ENCODE measurements at regions of chr2 and their contacts with region 1.

Region 1: DNA sequence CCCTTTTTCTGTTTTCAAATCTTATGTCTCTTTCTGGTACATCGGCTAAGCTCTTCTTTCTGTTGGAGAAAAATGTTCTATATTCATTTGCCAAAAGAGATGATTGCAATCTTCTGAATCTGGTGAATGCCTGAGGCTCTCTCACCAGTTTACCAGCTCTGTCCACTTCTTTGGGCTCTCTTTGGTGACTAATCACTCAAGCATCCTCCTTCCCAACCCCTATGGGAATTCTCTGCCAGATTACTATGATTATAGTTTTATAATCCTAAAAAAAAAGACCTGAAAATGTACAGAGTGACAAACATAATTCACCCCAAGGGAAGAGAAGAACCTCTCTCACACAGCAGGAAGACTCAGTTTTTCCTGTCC is 187.3 kb downstream of the CAMKMT start:
- DNase-seq: peak; percentile 68 to 96
- H3K4me3 ChIP-seq: peak overlapping the region; percentile 32
- H3K27ac ChIP-seq: peak overlapping the region; percentile 87
- H3K4me1 ChIP-seq: peaks cover 71% of the 10 kb centered on the region
- H3K27me3 ChIP-seq: no peaks in the 10 kb centered on the region
- CTCF ChIP-seq: no peak

Region 2: DNA sequence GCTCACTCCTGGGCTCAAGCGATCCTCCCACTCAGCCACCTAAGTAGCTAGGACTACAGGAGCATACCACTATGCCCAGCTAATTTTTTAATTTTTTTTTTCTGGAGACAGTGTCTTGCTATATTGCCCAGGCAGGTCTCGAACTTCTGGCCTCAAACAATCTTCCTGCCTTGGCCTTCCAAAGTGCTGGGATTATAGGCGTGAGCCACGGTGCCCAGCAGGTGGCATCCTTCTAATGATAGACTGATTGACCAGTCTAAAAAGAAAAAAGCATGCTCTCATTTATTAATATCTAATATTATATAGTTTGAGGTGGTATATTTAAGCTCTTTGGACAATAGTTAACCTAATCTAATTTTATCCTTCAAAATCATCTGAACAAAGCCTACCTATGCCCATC is 11.3 kb after region 1 on chr2:
- CTCF ChIA-PET with region 1: no interaction called
- POLR2A ChIA-PET with region 1: no interaction called
- intact Hi-C with region 1: loop called (anchors 1 kb)
- DNase-seq: peak; percentile 26 to 37
- H3K4me3 ChIP-seq: no peak overlapping the region
- H3K27ac ChIP-seq: peak overlapping the region; percentile 72
- H3K4me1 ChIP-seq: peaks cover 29% of the 10 kb centered on the region
- H3K27me3 ChIP-seq: no peaks in the 10 kb centered on the region
- CTCF ChIP-seq: peak; percentile 57

Region 3: GRCh38 chr2:44582363-44583008 is 33.4 kb after region 1 on chr2:
- CTCF ChIA-PET with region 1: no interaction called
- POLR2A ChIA-PET with region 1: no interaction called
- intact Hi-C with region 1: loop called (anchors 1 kb)
- DNase-seq: peak; percentile 9 to 95
- H3K4me3 ChIP-seq: peak overlapping the region; percentile 4; the same call in 1 of the 2 replicates
- H3K27ac ChIP-seq: peak overlapping the region; percentile 52
- H3K4me1 ChIP-seq: peaks cover 61% of the 10 kb centered on the region
- H3K27me3 ChIP-seq: no peaks in the 10 kb centered on the region
- CTCF ChIP-seq: no peak

Region 4: GRCh38 chr2:44596537-44597320 is 47.6 kb after region 1 on chr2:
- CTCF ChIA-PET with region 1: no interaction called
- POLR2A ChIA-PET with region 1: interaction called, 3 read pairs
- intact Hi-C with region 1: loop called (anchors 2 kb)
- DNase-seq: no peak
- H3K4me3 ChIP-seq: no peak overlapping the region
- H3K27ac ChIP-seq: no peak overlapping the region
- H3K4me1 ChIP-seq: peaks cover 26% of the 10 kb centered on the region
- H3K27me3 ChIP-seq: no peaks in the 10 kb centered on the region
- CTCF ChIP-seq: no peak

Region 5: DNA sequence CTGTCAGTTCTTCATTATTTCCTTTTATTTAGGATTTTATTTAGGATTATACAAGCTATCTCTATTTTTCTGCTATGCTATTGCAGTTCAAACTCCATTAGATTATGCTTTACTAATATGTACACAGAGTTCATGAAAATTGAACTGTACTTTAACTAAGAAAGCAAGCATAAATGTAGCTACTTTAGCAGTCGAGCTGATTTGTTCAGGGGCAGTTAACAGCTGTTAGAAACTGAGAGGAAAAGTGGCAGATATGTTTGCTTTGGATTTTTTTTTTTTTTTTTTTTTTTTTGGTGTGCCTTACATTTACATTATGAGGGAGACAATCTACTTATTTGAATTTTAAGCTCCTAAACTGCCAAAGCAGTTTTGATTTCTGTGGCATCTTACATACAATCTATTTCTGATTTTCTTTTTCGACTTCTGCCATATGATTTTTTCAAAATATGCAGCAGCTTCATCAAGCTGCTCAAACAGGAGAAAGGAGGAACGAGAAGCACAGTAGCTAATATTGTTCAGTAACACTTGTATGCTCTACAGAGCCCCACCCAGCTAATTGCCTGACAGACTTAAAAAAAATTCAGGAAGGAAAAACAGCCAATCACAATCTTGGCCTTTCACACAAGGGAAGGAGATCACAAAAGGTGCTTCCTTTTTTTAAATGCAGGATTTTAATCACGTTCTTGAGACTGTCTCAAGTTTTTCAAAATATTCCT is 159.0 kb after region 1 on chr2:
- CTCF ChIA-PET with region 1: no interaction called
- POLR2A ChIA-PET with region 1: no interaction called
- intact Hi-C with region 1: loop called (anchors 5 kb)
- DNase-seq: peak; percentile 38 to 66
- H3K4me3 ChIP-seq: peak overlapping the region; percentile 25; the same call in 1 of the 2 replicates
- H3K27ac ChIP-seq: peak overlapping the region; percentile 32
- H3K4me1 ChIP-seq: peaks cover 18% of the 10 kb centered on the region
- H3K27me3 ChIP-seq: no peaks in the 10 kb centered on the region
- CTCF ChIP-seq: no peak

Region 6: DNA sequence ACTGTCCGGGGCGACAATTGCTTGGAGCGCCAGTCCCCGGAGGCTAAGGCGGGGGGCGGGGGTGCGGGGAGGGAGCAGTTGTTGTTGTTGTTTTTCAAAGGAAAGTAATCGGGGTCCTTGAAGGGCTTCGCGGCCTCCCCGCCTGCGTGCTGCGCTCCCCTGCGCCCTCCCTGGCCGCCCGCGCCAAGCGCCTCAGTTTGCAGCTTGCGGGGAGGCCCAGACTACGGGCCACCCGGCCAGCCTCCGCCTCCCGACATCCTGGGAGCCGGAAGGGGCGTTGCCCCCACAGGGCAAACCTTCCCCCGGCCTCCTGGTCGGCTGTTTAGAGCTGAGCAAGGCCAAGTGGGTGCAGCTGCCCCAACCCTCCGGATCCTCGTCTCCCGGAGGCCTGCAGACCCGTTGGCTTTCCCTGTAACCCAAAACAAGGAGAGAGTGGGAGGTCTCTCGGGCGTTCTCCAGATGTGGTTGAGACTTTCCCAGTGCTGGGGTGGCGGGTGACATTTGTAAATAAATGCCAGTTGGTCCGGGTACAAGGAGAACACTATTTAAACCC is 388.7 kb after region 1 on chr2:
- CTCF ChIA-PET with region 1: no interaction called
- POLR2A ChIA-PET with region 1: no interaction called
- intact Hi-C with region 1: loop called (anchors 5 kb)
- DNase-seq: peak; percentile 86 to 91
- H3K4me3 ChIP-seq: peak overlapping the region; percentile 88
- H3K27ac ChIP-seq: peak overlapping the region; percentile 77
- H3K4me1 ChIP-seq: peaks cover 25% of the 10 kb centered on the region
- H3K27me3 ChIP-seq: no peaks in the 10 kb centered on the region
- CTCF ChIP-seq: no peak; the same call in 1 of the 2 replicates